ENCODE measurements at regions of chr2 and their contacts with region 1.

Region 1: DNA sequence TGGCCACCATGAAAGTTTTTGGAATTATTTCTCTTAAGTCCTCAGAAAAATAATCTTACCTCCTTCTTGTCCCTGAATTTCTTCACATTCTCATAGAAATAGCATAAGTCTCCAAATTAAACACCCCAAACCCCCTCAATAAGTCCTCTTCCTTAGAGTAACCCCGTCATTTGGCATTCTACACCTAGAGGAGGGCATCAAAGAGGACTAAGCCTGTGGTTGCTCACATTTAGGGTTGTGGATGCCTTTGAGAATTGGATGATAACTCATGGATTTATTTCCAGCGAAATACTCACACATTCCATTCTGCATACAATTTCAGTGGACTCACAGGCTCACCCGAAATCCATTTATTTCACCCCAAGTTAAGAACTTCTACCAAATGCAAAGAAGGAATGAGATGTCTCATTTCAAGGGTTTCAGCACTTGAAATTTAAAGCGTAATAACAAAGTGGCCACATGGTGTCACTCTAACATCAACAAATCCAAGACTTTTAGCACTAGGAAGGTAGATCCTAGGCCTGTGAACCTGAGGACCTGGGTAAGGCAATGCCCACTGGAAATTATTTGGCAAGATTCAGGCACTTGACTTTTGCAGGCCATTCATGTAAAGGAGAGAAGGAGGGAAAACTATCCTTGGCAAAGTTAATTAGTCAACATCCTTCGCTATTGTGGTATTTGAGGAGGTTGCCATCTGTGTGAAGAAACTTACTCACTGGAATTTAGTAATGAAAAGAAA is 24.6 kb downstream of the DYTN start:
- DNase-seq: peak in 2 of 4 donors; percentile 46 to 57
- ATAC-seq: peak; percentile 97
- H3K4me3 ChIP-seq: no peak overlapping the region
- H3K27ac ChIP-seq: no peak overlapping the region
- H3K4me1 ChIP-seq: no peaks in the 10 kb centered on the region
- H3K27me3 ChIP-seq: no peaks in the 10 kb centered on the region
- CTCF ChIP-seq: peak; percentile 54 to 65

Region 2: DNA sequence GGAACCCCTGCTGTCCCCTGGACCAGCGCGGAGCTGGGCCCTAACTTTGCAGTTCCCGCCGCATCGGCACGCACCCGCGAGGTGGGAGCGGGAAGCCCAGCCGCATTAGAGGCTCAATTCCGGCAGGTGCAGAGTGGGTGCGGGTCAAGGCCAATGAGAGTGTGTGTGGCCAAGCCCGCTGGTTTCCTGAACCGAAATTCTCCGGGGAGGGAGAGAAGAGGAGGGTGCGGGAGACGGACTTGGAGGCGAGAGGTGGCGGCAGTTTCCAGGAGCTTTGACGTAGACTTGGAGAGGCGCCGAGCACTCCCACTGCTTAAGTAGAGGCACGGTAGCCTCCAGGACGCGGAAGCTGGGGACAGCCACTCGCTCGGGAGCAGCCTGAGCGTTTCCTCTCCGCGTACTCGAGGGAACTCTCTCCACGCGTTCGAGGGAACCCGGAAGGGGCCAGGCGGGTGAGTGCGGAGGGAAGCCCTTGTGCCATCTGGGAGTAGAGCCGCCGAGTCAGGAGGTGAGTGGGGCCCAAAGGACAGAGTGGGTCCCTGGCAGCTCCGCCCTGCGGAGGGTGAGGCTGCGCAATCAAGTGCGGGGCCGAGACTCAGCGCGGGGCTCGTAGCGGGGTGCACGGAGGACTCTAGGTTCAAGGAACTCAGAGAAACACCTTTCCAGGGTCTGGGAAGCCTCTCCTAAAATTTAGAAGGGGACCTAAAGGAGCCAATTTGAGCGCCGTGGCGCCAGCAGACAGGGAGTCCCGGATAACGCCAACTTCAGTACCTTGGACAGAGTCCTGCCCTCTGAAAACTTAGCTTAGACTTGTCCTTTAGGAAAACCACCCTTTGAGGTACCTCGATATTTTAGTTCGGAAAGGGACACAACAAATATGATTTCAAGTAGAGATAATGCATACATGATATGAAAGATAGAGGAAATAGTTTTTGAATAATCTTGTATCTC is 51.2 kb before region 1 on chr2 and contains the start of gene FAM237A:
- intact Hi-C with region 1: no loop called
- DNase-seq: peak in 3 of 4 donors; percentile 55 to 68 (median 59)
- ATAC-seq: peak; percentile 79
- H3K4me3 ChIP-seq: no peak within 1 kb of the TSS
- H3K27ac ChIP-seq: no peak within 1 kb of the TSS
- H3K4me1 ChIP-seq: no peaks in the 10 kb centered on the region
- H3K27me3 ChIP-seq: peaks cover 17 to 42% of the 10 kb centered on the region in 2 donors
- CTCF ChIP-seq: no peak
- polyA plus RNA-seq, gene FAM237A: not detected

Region 3: DNA sequence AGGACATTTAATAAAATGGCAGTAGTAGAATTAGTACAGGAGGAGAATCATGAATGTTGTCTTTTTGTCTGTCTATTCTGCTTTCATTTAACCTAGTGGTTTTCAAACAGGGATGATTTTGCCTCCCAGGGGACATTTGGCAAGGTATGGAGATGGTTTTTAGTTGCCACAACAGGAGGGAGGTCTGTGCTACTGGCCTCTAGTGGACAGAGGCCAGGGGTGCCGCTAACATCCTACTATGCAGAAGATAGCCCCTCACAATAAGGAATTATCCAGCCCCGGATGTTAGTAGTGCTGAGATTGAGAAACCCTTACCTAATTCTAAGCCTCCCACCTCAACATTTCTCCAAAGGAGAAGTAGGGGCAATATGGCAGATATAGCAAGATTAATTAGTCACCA is 90.2 kb after region 1 on chr2:
- intact Hi-C with region 1: loop called in 1 of 2 experiments (anchors 10 kb)
- DNase-seq: no peak
- ATAC-seq: no peak
- H3K4me3 ChIP-seq: no peak overlapping the region
- H3K27ac ChIP-seq: no peak overlapping the region
- H3K4me1 ChIP-seq: no peaks in the 10 kb centered on the region
- H3K27me3 ChIP-seq: no peaks in the 10 kb centered on the region
- CTCF ChIP-seq: peak in 1 of 2 donors; percentile 31

Measured in left lung (tissue), 14 donors.